ENCODE measurements at regions of chr18 and their contacts with region 1.

Region 1: GRCh38 chr18:59907172-59907571 is 7.4 kb downstream of the PMAIP1 start:
- DNase-seq: no peak
- ATAC-seq: no peak
- H3K4me3 ChIP-seq: no peak overlapping the region
- H3K4me3 Mint-ChIP-seq: no peak overlapping the region
- H3K27ac ChIP-seq: no peak overlapping the region
- H3K27ac Mint-ChIP-seq: peak overlapping the region in 1 of 2 donors; percentile 8
- H3K4me1 ChIP-seq: peaks cover 7 to 14% of the 10 kb centered on the region in 2 experiments
- H3K4me1 Mint-ChIP-seq: peaks cover 47 to 50% (median 47%) of the 10 kb centered on the region in 3 donors
- H3K27me3 ChIP-seq: no peaks in the 10 kb centered on the region
- H3K27me3 Mint-ChIP-seq: peaks cover 0 to 1% of the 10 kb centered on the region in 2 donors

Region 2: DNA sequence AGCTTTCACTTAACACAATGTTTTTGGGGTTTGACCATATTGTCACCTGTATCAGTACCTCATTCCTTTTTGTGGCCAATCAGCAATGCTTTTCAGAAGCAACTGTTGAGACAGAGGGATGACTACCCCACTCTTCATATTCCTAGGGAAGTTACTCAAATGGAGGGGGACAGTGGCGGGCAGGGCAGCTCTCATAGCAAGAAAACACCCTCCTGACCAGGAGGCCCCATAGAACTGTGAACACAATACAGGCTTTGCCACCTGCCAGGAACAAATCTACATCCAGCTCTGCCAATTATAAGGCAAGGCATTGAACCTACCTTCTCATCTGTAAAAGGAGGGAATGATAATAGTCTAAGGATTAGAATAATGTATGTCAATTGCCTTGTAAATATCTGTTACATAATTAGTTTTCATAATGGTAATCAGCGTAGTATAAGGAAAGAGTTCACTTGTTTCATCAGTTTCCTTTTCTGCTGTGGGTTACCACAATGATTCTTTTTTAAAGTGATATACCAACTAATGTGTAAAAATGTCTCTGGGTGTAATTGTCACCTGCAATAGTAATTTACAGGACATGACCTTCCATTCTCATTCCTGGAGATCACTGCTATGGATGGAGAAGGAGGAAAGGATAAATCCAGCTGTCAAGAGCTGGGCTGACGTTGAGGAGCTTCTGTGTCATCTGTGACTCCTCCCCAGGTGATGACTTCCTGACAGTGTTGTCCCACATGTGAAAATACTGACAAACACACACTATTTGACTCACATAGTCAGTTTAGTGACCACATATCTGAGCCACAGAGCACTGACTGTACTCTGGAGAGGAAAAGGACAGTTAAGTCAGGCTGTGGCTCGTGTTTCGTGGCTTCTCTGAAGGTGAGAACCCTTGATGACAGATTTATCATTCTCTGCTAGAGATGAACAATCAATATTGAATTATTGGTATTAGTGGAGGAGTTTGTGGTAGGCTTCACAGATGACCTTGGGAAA is 1291.7 kb before region 1 on chr18:
- CTCF ChIA-PET with region 1: no interaction called
- POLR2A ChIA-PET with region 1: no interaction called
- DNase-seq: peak in 32 of 35 experiments; percentile 17 to 75 (median 44)
- ATAC-seq: peak; percentile 92 to 95 (median 93)
- H3K4me3 ChIP-seq: peak overlapping the region in 1 of 2 donors; percentile 27
- H3K4me3 Mint-ChIP-seq: peak overlapping the region; percentile 65 to 70 (median 66)
- H3K27ac ChIP-seq: peak overlapping the region; percentile 98
- H3K27ac Mint-ChIP-seq: peak overlapping the region; percentile 99
- H3K4me1 ChIP-seq: peaks cover 20 to 32% of the 10 kb centered on the region in 2 experiments
- H3K4me1 Mint-ChIP-seq: peaks cover 50 to 54% (median 51%) of the 10 kb centered on the region in 3 donors
- H3K27me3 ChIP-seq: no peaks in the 10 kb centered on the region
- H3K27me3 Mint-ChIP-seq: no peaks in the 10 kb centered on the region

Region 3: GRCh38 chr18:60020601-60020925 is 113.4 kb after region 1 on chr18:
- CTCF ChIA-PET with region 1: no interaction called
- POLR2A ChIA-PET with region 1: interaction called in 1 of 2 experiments, 11 read pairs
- DNase-seq: no peak
- ATAC-seq: no peak
- H3K4me3 ChIP-seq: no peak overlapping the region
- H3K4me3 Mint-ChIP-seq: no peak overlapping the region
- H3K27ac ChIP-seq: no peak overlapping the region
- H3K27ac Mint-ChIP-seq: no peak overlapping the region
- H3K4me1 ChIP-seq: no peaks in the 10 kb centered on the region
- H3K4me1 Mint-ChIP-seq: no peaks in the 10 kb centered on the region
- H3K27me3 ChIP-seq: no peaks in the 10 kb centered on the region
- H3K27me3 Mint-ChIP-seq: peaks cover 14 to 15% of the 10 kb centered on the region in 2 donors